Caco-2 (cell line): ENCODE measurements at regions of chr6 and their contacts with region 1.

Region 1: DNA sequence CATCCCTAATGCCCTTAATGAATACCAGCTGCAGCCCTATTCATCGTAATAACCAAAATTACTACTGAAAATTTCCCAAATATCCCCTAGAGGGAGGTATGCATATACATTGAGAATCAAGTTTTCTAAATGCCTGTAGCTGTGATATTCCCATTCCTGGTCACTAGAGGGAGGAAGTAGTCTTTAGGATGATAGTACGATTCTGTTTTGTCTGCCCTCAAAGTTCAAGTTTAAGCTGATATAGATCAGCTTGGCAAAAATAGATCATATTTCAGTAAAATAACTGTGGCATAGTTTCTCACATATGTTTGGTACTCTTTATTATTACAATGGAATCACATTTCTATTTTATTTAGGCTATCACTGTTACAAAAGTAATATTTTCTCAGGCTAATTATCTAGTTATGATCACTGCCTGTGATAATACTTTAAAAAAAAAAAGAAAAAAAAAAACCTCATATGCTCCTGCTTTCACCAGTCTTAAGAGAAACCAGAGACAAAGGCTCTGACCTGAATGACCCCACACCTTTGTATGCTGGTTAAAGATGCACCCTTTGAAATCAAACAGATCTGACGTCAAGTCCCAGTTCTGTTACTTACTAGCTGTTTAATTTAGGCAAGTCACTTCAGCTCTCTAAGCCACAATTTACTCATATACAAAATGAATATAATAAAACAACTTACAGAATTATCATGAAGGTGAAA is 11.0 kb downstream of the TSPYL1 start:
- DNase-seq: peak in 1 of 2 experiments; percentile 56
- H3K4me3 ChIP-seq: no peak overlapping the region
- H3K4me3 Mint-ChIP-seq: no peak overlapping the region
- H3K27ac Mint-ChIP-seq: no peak overlapping the region
- H3K4me1 ChIP-seq: no peaks in the 10 kb centered on the region
- H3K4me1 Mint-ChIP-seq: no peaks in the 10 kb centered on the region
- H3K27me3 ChIP-seq: no peaks in the 10 kb centered on the region
- H3K27me3 Mint-ChIP-seq: no peaks in the 10 kb centered on the region
- CTCF ChIP-seq: peak; percentile 91 to 94

Region 2: DNA sequence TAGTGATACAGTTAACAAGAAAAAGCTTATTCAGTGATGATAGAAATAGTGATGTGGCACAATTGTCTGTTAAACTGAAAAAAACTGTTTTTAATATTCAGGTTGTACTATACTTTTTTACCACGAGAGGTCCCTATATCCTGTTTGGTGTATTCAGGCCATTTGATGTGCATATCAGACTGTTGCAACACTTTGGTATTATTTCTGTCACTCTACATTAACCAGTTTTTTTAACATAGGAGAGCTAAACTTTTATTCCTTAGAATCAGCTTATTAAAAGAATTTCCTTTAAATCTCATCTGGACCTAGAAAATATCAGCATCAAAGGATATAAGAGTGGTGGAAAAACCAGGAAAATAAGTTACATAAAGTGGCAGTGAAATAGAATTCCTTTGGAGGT is 51.7 kb before region 1 on chr6:
- CTCF ChIA-PET with region 1: interaction called, 6 read pairs
- POLR2A ChIA-PET with region 1: no interaction called
- intact Hi-C with region 1: loop called (anchors 5 kb)
- DNase-seq: peak in 1 of 2 experiments; percentile 37
- H3K4me3 ChIP-seq: no peak overlapping the region
- H3K4me3 Mint-ChIP-seq: no peak overlapping the region
- H3K27ac Mint-ChIP-seq: no peak overlapping the region
- H3K4me1 ChIP-seq: no peaks in the 10 kb centered on the region
- H3K4me1 Mint-ChIP-seq: no peaks in the 10 kb centered on the region
- H3K27me3 ChIP-seq: no peaks in the 10 kb centered on the region
- H3K27me3 Mint-ChIP-seq: no peaks in the 10 kb centered on the region
- CTCF ChIP-seq: peak; percentile 31 to 48

Region 3: GRCh38 chr6:116253505-116254296 is 15.0 kb before region 1 on chr6 and contains the start of gene TSPYL4:
- CTCF ChIA-PET with region 1: interaction called, 16 read pairs
- POLR2A ChIA-PET with region 1: no interaction called
- intact Hi-C with region 1: loop called (anchors 2 kb)
- DNase-seq: peak; percentile 92
- H3K4me3 ChIP-seq: peak within 1 kb of the TSS; percentile 99
- H3K4me3 Mint-ChIP-seq: no peak within 1 kb of the TSS
- H3K27ac Mint-ChIP-seq: no peak within 1 kb of the TSS
- H3K4me1 ChIP-seq: peaks cover 19% of the 10 kb centered on the region
- H3K4me1 Mint-ChIP-seq: peaks cover 16% of the 10 kb centered on the region
- H3K27me3 ChIP-seq: no peaks in the 10 kb centered on the region
- H3K27me3 Mint-ChIP-seq: no peaks in the 10 kb centered on the region
- CTCF ChIP-seq: no peak
- total RNA-seq, gene TSPYL4: 10.7 and 10.9 TPM in 2 replicates

Region 4: DNA sequence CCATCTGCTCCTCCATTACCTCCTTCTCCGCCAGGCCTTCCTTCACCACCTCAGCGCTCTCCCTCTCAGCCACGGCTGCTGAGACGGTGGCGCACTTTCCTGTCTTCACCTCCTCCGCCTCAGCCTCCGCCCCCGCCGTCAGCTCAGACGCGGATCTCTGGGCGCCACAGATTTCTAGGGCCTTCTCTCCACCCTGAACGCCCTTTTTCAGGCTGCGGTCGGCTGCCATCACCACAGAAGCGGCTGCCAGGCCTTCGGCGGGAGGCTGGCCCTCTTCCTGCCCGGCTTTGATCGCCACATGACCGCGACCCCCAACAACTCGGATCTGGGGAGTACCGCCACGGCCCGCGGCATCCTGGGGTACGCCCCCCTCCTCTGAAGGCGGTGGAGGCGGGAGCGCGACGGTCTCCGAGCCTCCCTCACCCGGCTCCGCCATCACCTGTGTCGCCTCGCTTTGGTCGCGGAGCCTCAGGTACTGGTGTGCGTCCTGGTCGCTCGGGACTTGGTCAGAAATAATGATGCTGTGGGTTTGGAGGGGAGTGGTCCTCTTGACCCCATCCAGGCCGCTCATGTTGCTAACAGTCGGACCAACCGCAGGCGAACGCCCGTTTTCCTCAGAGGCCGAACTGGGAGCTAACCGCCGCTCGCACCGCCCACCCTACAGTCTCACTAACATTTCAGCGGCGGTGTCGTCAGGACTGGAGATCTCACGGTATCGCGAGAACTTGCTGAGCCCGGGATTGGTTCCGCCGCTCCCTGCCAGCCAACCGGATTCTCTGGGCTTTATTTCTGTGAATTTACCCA is 10.7 kb after region 1 on chr6 and contains the start of gene TSPYL1:
- CTCF ChIA-PET with region 1: interaction called, 10 read pairs
- POLR2A ChIA-PET with region 1: interaction called, 5 read pairs
- intact Hi-C with region 1: loop called (anchors 1 kb)
- DNase-seq: peak; percentile 94
- H3K4me3 ChIP-seq: peak within 1 kb of the TSS; percentile 58
- H3K4me3 Mint-ChIP-seq: peak within 1 kb of the TSS; percentile 90
- H3K27ac Mint-ChIP-seq: peak within 1 kb of the TSS; percentile 87
- H3K4me1 ChIP-seq: peaks cover 18% of the 10 kb centered on the region
- H3K4me1 Mint-ChIP-seq: peaks cover 24% of the 10 kb centered on the region
- H3K27me3 ChIP-seq: no peaks in the 10 kb centered on the region
- H3K27me3 Mint-ChIP-seq: no peaks in the 10 kb centered on the region
- CTCF ChIP-seq: no peak
- total RNA-seq, gene TSPYL1: 55.0 and 57.3 TPM in 2 replicates

Region 5: DNA sequence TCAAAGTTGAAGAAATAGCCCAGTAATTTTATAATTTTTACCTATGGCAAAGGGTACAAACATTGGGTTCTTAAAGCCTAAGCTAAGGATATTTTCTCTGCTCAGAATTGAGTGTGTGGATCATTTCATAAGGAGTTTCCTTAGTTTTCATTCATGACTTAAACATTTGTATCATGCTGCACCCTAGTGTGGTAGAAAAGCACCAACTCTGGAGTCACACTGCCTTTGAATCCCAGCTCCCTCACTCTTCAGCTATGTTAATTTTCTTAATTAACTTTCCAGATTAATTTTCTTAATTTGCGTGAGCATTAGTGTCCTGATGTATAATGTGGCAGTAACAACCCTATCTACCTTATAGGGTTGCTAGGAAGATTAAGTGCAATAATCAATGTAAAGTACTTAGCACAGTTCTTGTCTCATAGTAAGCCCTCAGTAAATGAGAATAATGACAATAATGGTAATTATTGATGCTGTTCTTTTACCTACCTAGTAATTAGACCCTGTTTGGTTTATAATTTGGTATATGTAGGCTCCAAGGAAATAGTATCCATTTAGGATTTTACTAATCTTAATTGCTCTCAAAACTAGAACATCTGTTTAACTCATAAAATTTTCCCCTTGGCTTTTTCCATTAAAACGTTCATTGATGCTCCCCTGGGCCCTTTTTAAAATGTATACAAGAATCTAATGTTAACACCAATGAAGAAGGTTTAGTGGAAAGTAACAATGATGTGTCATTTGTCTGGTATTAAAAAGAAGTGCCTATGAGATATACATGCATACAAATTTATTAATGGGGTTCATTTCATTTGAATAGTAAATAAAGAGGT is 133.6 kb after region 1 on chr6:
- CTCF ChIA-PET with region 1: no interaction called
- POLR2A ChIA-PET with region 1: no interaction called
- intact Hi-C with region 1: loop called (anchors 1 kb)
- DNase-seq: no peak
- H3K4me3 ChIP-seq: no peak overlapping the region
- H3K4me3 Mint-ChIP-seq: no peak overlapping the region
- H3K27ac Mint-ChIP-seq: no peak overlapping the region
- H3K4me1 ChIP-seq: peaks cover 4% of the 10 kb centered on the region; the same call in 1 of the 2 replicates
- H3K4me1 Mint-ChIP-seq: no peaks in the 10 kb centered on the region
- H3K27me3 ChIP-seq: no peaks in the 10 kb centered on the region
- H3K27me3 Mint-ChIP-seq: no peaks in the 10 kb centered on the region
- CTCF ChIP-seq: no peak

Region 6: DNA sequence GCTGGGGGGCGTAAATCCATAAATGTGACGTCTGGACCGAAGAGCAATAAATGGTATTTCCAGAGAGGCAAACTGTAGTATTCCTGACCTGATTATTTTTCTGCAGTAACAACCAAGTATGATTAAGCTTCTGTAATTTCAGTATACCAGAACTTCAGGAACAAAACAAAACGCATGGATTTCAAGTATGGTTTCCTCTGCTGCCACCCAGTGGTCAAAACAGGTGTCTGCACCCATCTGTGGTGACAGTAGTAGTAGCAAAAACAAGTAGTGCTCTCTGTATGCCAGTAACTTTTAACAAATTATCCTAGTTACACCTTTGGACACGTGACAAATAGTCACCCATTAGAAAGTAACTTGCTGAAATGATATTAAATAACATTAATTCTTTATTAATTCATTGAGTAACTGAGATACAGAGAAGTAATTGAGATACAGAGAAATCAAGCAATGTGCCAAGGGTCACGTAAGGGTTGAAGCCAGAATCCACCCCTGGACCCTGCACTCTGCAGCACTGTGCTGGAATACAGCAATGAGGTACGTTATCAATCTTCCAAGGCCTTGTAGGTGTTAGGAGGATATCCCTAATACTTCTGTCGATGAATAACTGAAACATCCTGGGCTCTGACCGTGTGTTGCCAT is 292.8 kb after region 1 on chr6:
- CTCF ChIA-PET with region 1: interaction called, 10 read pairs
- POLR2A ChIA-PET with region 1: no interaction called
- intact Hi-C with region 1: no loop called
- DNase-seq: peak; percentile 68 to 73
- H3K4me3 ChIP-seq: no peak overlapping the region
- H3K4me3 Mint-ChIP-seq: no peak overlapping the region
- H3K27ac Mint-ChIP-seq: no peak overlapping the region
- H3K4me1 ChIP-seq: peaks cover 15% of the 10 kb centered on the region
- H3K4me1 Mint-ChIP-seq: peaks cover 26% of the 10 kb centered on the region
- H3K27me3 ChIP-seq: no peaks in the 10 kb centered on the region
- H3K27me3 Mint-ChIP-seq: no peaks in the 10 kb centered on the region
- CTCF ChIP-seq: peak; percentile 70 to 91

Region 7: GRCh38 chr6:116648156-116648555 is 379.4 kb after region 1 on chr6:
- CTCF ChIA-PET with region 1: no interaction called
- POLR2A ChIA-PET with region 1: no interaction called
- intact Hi-C with region 1: loop called (anchors 1 kb)
- DNase-seq: no peak
- H3K4me3 ChIP-seq: no peak overlapping the region
- H3K4me3 Mint-ChIP-seq: no peak overlapping the region
- H3K27ac Mint-ChIP-seq: no peak overlapping the region
- H3K4me1 ChIP-seq: no peaks in the 10 kb centered on the region
- H3K4me1 Mint-ChIP-seq: no peaks in the 10 kb centered on the region
- H3K27me3 ChIP-seq: no peaks in the 10 kb centered on the region
- H3K27me3 Mint-ChIP-seq: no peaks in the 10 kb centered on the region
- CTCF ChIP-seq: no peak